BJ (cell line): ENCODE measurements at regions of chr11 and their contacts with region 1.

Region 1: GRCh38 chr11:78809931-78810541 is 235.4 kb upstream of the NARS2 start:
- DNase-seq: peak; percentile 61
- H3K4me3 ChIP-seq: no peak overlapping the region
- H3K27me3 ChIP-seq: no peaks in the 10 kb centered on the region
- CTCF ChIP-seq: no peak

Region 2: GRCh38 chr11:78773077-78773476 is 37.0 kb before region 1 on chr11:
- CTCF ChIA-PET with region 1: no interaction called
- POLR2A ChIA-PET with region 1: no interaction called
- DNase-seq: no peak
- H3K4me3 ChIP-seq: no peak overlapping the region
- H3K27me3 ChIP-seq: no peaks in the 10 kb centered on the region
- CTCF ChIP-seq: no peak

Region 3: DNA sequence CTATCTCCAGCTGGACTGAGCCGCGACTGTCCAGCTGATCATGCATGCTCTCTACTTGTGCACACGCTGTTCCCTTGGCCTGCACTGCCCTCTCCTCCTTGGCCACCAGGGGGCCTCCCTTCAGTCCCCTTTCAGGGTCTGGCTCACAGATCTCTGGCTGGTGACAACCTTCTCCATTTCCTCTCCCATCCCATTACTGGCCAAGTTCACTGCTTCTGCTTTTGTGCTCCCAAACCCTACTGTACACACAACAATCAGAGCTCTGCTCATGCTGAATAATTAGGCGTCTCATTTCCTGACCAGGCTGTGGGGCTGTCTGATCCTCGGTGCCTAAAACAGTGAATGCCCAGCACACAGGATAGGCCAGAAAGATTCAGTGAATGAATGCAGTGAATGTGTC is 11.4 kb before region 1 on chr11:
- CTCF ChIA-PET with region 1: interaction called, 17 read pairs
- POLR2A ChIA-PET with region 1: interaction called, 4 read pairs
- DNase-seq: no peak
- H3K4me3 ChIP-seq: no peak overlapping the region
- H3K27me3 ChIP-seq: no peaks in the 10 kb centered on the region
- CTCF ChIP-seq: peak; percentile 88

Region 4: GRCh38 chr11:78821371-78822306 is 11.6 kb after region 1 on chr11:
- CTCF ChIA-PET with region 1: interaction called, 11 read pairs
- POLR2A ChIA-PET with region 1: interaction called, 6 read pairs
- DNase-seq: no peak
- H3K4me3 ChIP-seq: no peak overlapping the region
- H3K27me3 ChIP-seq: no peaks in the 10 kb centered on the region
- CTCF ChIP-seq: no peak